ENCODE measurements at regions of chrX and their contacts with region 1.

Region 1: GRCh38 chrX:103918581-103919269 is 43.7 kb upstream of the TMSB15B start:
- DNase-seq: peak; percentile 64 to 83
- H3K4me3 ChIP-seq: peak overlapping the region; percentile 64 to 73
- H3K27ac ChIP-seq: peak overlapping the region; percentile 85 to 86
- H3K4me1 ChIP-seq: peaks cover 0 to 4% (median 0%) of the 10 kb centered on the region in 4 donors
- H3K27me3 ChIP-seq: no peaks in the 10 kb centered on the region
- CTCF ChIP-seq: no peak

Region 2: GRCh38 chrX:104007242-104007641 is 88.5 kb after region 1 on chrX:
- intact Hi-C with region 1: loop called (anchors 1 kb)
- DNase-seq: no peak
- H3K4me3 ChIP-seq: no peak overlapping the region
- H3K27ac ChIP-seq: no peak overlapping the region
- H3K4me1 ChIP-seq: no peaks in the 10 kb centered on the region
- H3K27me3 ChIP-seq: no peaks in the 10 kb centered on the region
- CTCF ChIP-seq: no peak

Measured in tibial artery (tissue), 4 donors.